A549 (cell line): ENCODE measurements at regions of chr17 and their contacts with region 1.

Region 1: DNA sequence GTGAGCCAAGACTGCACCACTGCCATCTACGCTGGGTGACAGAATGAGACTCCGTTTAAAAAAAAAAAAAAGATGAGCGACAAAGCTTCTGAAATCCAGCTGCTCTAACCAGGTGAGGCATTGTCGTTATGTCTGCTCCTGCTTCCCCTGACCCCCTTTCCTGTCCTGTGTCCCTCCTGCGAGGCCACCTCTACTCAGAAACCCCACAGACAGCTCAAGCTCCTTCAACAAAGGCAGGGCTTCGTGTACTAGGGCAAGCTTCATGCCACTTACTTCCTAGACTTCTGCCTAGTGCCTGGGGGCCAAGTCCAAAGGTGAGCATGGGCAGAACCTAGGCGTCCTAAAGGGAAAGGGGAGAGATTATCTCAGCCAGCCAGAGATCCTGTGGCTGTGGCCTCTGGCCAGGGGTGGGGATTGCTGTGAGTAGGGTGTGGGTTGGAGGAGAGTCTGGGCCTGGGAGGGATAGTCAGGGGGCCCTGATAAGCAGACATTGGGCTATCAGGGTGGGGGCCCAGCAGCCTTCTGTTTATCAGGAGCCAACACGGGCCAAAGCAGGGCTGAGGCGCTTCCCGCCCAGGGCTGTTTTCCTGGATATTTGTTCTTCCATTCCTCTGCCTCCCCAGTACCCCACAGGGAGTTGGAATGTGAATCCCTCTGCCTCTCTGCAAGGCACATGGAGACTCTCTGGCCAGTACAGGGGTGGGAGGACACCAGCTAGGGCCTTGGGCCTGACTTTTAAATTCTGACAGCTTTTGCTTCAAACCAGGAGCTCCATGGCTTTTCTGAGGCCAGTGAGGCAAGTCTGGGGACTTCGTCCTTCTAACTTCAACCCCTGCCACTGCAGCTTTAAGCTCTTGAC is 10.4 kb downstream of the ERAL1 start:
- DNase-seq: no peak
- ATAC-seq: no peak; a peak in 1 of 6 replicates
- H3K4me3 ChIP-seq: no peak overlapping the region
- H3K27ac ChIP-seq: no peak overlapping the region
- H3K4me1 ChIP-seq: no peaks in the 10 kb centered on the region
- CTCF ChIP-seq: no peak
- EP300 ChIP-seq: no peak
- POLR2A ChIP-seq: no peak
- RAD21 ChIP-seq: no peak

Region 2: GRCh38 chr17:28812091-28812747 is 53.0 kb before region 1 on chr17:
- CTCF ChIA-PET with region 1: interaction called, 3 read pairs
- POLR2A ChIA-PET with region 1: interaction called, 13 read pairs
- DNase-seq: peak; percentile 97 to 100
- ATAC-seq: peak; percentile 97 to 98
- H3K4me3 ChIP-seq: peak overlapping the region; percentile 73
- H3K27ac ChIP-seq: peak overlapping the region; percentile 89 to 94
- H3K4me1 ChIP-seq: peaks cover 46% of the 10 kb centered on the region
- CTCF ChIP-seq: no peak
- EP300 ChIP-seq: no peak
- POLR2A ChIP-seq: peak; percentile 54
- RAD21 ChIP-seq: no peak

Region 3: DNA sequence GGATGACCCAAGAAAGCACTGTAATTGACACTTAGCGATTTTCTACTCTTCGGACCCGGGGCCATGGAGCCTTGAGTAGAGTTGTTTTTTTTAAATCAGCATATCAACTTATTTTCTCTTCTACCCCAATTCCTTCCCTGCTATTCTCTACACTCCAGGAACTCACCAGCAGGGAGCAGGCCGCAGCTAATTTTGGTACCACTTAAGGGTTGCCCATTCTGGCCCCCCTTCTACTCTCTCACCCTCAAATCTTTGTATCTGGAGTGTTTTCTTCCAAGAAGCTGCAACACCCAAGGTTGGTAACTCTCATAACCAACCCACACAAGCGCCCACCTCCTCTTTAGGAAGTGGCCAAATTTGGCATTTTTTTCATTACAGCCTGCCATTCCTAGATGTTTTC is 15.9 kb before region 1 on chr17:
- CTCF ChIA-PET with region 1: interaction called, 11 read pairs
- POLR2A ChIA-PET with region 1: no interaction called
- DNase-seq: peak in 1 of 2 experiments; percentile 49
- ATAC-seq: peak; percentile 71 to 72; a peak in 5 of 6 replicates
- H3K4me3 ChIP-seq: no peak overlapping the region
- H3K27ac ChIP-seq: no peak overlapping the region
- H3K4me1 ChIP-seq: 0 out of 3 replicates have a peak, but pooled peaks cover 2% of the 10 kb centered on the region
- CTCF ChIP-seq: no peak
- EP300 ChIP-seq: no peak
- POLR2A ChIP-seq: no peak
- RAD21 ChIP-seq: 0 out of 5 replicates have a peak, but pooled peaks of 1 of the 2 experiments have one; percentile 7